Common myeloid progenitor, CD34-positive (primary cell): ENCODE measurements at regions of chr17 and their contacts with region 1.

Region 1: DNA sequence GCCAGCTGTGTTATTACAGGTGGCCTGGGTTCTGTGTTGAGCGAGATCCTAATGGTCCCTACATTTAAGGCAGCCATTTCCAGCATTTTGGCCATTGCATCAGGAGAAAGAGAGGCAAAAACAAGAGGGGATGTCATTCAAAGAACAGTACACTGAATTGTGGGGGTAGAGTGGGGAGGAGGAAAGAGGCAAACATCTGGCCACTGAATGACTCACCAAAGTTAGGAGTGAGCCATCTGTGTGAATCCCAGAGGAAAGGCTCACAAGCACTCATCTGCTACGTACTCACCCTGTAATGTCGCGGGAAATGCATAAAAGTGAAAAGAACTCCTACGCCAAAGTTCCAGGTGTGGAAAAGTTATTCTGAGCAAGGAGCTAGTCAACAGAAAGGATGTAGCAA is 16.7 kb downstream of the KRABD2 start:
- DNase-seq: peak in 2 of 3 donors; percentile 57 to 70
- H3K4me3 ChIP-seq: peak overlapping the region in 4 of 7 experiments; percentile 2 to 50 (median 26)
- H3K27ac ChIP-seq: peak overlapping the region in 1 of 2 experiments; percentile 37
- H3K4me1 ChIP-seq: peaks cover 8 to 37% (median 32%) of the 10 kb centered on the region in 4 experiments
- H3K27me3 ChIP-seq: no peaks in the 10 kb centered on the region

Region 2: GRCh38 chr17:8369944-8370343 is 10.2 kb after region 1 on chr17:
- CTCF ChIA-PET with region 1: interaction called, 18 read pairs
- POLR2A ChIA-PET with region 1: no interaction called
- DNase-seq: peak; percentile 33 to 61 (median 58)
- H3K4me3 ChIP-seq: peak overlapping the region in 2 of 7 experiments; percentile 23 to 42
- H3K27ac ChIP-seq: peak overlapping the region; percentile 21 to 68
- H3K4me1 ChIP-seq: peaks cover 6 to 12% (median 11%) of the 10 kb centered on the region in 4 experiments
- H3K27me3 ChIP-seq: no peaks in the 10 kb centered on the region

Region 3: GRCh38 chr17:8376271-8377067 is 16.7 kb after region 1 on chr17 and contains the start of gene KRABD2:
- CTCF ChIA-PET with region 1: interaction called, 15 read pairs
- POLR2A ChIA-PET with region 1: interaction called, 6 read pairs
- DNase-seq: peak; percentile 88 to 95 (median 95)
- H3K4me3 ChIP-seq: peak within 1 kb of the TSS; percentile 59 to 99 (median 88)
- H3K27ac ChIP-seq: peak within 1 kb of the TSS; percentile 62 to 87
- H3K4me1 ChIP-seq: peaks cover 0 to 36% (median 31%) of the 10 kb centered on the region in 4 experiments
- H3K27me3 ChIP-seq: no peaks in the 10 kb centered on the region

Region 4: GRCh38 chr17:8435245-8436168 is 75.7 kb after region 1 on chr17 and contains the start of gene NDEL1:
- CTCF ChIA-PET with region 1: no interaction called
- POLR2A ChIA-PET with region 1: no interaction called
- DNase-seq: peak; percentile 97 to 98 (median 98)
- H3K4me3 ChIP-seq: peak within 1 kb of the TSS; percentile 76 to 99 (median 94)
- H3K27ac ChIP-seq: peak within 1 kb of the TSS; percentile 90 to 97
- H3K4me1 ChIP-seq: peaks cover 3 to 19% (median 10%) of the 10 kb centered on the region in 4 experiments
- H3K27me3 ChIP-seq: no peaks in the 10 kb centered on the region